HCT116 (cell line): ENCODE measurements at regions of chr1 and their contacts with region 1.

Region 1: DNA sequence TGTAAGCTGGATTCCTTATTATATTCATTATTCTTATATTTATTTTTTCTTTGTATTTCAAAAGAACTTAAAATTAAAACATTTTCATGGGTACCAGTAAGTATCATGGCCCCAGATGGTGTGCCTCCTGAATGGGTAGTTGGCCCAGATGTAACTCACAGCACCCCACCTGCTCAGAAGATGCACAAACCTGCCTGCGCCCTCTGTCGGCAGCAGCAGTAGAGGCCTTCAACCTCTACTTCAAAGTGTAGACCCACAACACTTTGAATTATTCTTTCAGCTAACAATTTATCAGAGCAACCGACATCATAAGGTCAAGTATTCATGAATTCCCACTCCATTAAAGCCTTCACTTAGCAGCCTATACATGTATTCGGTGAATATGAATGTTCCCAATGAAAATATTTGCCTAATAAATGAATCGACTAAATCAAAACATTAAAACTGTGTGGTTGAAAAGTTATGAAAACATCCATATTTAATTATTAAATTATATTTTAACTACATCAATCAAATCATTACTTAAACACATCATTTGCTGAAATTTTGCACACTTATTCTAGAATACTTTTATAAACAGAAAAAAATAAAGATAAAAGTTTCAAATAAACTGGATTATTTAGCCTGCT is 25.4 kb downstream of the PIGM start:
- DNase-seq: peak; percentile 64
- ATAC-seq: peak; percentile 94
- H3K4me3 ChIP-seq: no peak overlapping the region
- H3K27ac ChIP-seq: no peak overlapping the region
- H3K4me1 ChIP-seq: no peaks in the 10 kb centered on the region
- H3K27me3 ChIP-seq: no peaks in the 10 kb centered on the region
- CTCF ChIP-seq: peak; percentile 94 to 98 (median 95)
- POLR2A ChIP-seq: no peak
- RAD21 ChIP-seq: peak; percentile 88

Region 2: DNA sequence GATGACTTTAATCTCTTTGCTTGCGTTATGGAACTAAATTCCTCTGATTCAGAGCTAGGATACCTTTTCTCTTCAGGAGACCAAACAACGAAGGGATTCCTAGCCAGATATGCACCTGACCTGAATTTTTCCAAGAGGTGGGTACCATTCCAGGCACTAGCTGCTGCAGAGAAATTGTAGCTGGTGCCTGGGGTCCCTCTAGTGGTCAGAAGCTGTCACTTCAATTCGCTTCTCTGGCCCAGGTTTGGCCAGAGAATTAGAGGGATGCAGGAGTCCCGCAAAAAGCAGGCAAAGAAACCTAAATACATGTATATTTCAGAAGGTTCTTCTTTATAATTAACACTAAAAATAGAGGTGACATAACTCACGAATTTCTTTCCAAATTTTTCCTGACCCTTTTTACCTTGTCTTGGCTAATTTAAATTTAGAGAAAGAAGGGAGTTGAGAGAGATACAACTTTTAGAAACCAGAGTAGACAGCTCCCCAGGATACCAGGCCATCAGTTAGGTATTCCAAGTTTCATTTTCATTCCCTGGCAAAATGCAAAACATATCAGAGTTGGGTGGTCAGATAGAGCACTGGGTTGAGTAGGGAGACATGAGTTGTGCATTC is 792.2 kb before region 1 on chr1:
- CTCF ChIA-PET with region 1: interaction called, 13 read pairs
- POLR2A ChIA-PET with region 1: no interaction called
- RAD21 ChIA-PET with region 1: no interaction called
- intact Hi-C with region 1: loop called (anchors 10 kb)
- DNase-seq: peak; percentile 10
- ATAC-seq: peak; percentile 86
- H3K4me3 ChIP-seq: no peak overlapping the region
- H3K27ac ChIP-seq: no peak overlapping the region
- H3K4me1 ChIP-seq: no peaks in the 10 kb centered on the region
- H3K27me3 ChIP-seq: peaks cover 4% of the 10 kb centered on the region; the same call in 1 of the 2 replicates
- CTCF ChIP-seq: peak; percentile 65 to 89 (median 84)
- POLR2A ChIP-seq: no peak
- RAD21 ChIP-seq: peak; percentile 61

Region 3: GRCh38 chr1:159587461-159587951 is 418.9 kb before region 1 on chr1 and contains the start of gene APCS:
- CTCF ChIA-PET with region 1: no interaction called
- POLR2A ChIA-PET with region 1: no interaction called
- RAD21 ChIA-PET with region 1: no interaction called
- intact Hi-C with region 1: no loop called
- DNase-seq: no peak
- ATAC-seq: no peak
- H3K4me3 ChIP-seq: no peak within 1 kb of the TSS
- H3K27ac ChIP-seq: no peak within 1 kb of the TSS
- H3K4me1 ChIP-seq: no peaks in the 10 kb centered on the region
- H3K27me3 ChIP-seq: peaks cover 5% of the 10 kb centered on the region
- CTCF ChIP-seq: no peak
- POLR2A ChIP-seq: no peak
- RAD21 ChIP-seq: no peak
- total RNA-seq, gene APCS: 0.42 TPM

Region 4: DNA sequence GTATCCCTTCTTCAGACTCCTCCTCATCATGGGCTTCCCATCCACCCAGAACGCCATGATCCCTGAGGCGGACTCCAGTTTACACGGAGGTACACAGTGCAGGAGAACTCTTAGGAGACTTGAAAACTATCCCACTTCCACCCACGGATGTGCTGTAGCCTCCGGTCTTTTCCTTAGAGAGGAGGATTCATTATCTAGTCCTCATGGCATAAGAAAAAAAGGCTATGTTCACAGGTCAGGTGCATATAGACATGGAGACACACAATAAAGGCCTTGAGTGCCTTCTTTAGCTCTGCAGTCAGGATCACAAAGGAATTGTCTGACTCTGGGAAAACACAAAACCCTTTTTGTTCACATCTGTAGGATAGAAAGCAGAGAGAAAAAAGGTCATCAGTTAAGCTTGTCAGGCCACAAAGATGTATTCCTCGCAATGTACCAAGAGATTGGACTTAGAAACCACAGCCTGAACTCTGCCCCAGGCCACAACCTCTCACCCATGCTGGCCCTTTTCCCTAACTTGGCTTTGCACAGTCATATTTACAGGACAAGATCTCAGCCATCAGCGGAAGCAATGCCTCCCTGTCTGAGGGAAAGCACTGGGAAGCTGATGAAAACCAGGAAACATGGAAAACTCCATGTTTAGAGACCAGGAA is 301.0 kb before region 1 on chr1:
- CTCF ChIA-PET with region 1: no interaction called
- POLR2A ChIA-PET with region 1: no interaction called
- RAD21 ChIA-PET with region 1: no interaction called
- intact Hi-C with region 1: no loop called
- DNase-seq: no peak
- ATAC-seq: no peak
- H3K4me3 ChIP-seq: no peak overlapping the region
- H3K27ac ChIP-seq: no peak overlapping the region
- H3K4me1 ChIP-seq: no peaks in the 10 kb centered on the region
- H3K27me3 ChIP-seq: no peaks in the 10 kb centered on the region
- CTCF ChIP-seq: no peak
- POLR2A ChIP-seq: no peak
- RAD21 ChIP-seq: no peak

Region 5: DNA sequence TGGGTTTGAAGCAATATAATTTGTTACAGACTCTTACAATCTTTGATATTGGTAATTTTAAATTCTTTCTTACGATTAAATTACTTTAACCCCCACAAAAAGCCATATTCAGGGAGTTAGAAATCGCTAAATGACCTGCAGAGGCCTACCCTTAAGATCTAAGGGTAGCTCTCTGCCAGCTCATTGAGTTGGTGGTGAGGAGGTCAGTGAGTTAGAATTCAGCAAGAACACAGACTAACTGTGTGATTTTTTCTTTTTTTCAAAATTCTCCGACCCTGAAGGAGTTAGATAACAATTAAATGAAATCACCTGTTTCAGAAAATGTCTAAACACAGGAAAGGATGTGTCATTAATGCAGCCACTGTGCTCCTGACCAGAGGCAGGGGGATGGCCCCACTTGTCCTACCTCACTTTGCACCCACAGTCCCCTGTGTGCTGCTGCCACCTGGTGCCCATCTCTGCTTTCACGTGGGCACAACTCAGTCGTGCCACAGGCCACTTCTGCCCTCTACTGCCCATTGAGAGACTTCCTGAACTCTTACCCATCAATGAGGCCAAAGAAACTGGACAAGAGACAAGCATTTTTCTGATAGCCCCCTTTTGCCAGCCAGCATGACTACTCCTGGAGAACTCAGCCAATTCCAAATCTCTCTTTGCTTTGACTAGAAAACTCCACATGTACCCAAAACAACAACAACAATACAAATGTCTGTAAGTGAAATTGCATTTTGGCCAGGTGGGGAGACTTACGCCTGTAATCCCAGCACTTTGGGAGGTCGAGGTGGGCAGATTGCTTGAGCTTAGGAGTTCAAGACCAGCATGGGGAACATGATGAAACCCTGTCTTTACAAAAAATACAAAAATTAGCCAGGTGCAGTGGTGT is 114.9 kb before region 1 on chr1:
- CTCF ChIA-PET with region 1: interaction called, 249 read pairs
- POLR2A ChIA-PET with region 1: interaction called, 6 read pairs
- RAD21 ChIA-PET with region 1: interaction called, 9 to 32 read pairs
- intact Hi-C with region 1: loop called (anchors 1 kb)
- DNase-seq: peak; percentile 87
- ATAC-seq: peak; percentile 94
- H3K4me3 ChIP-seq: no peak overlapping the region
- H3K27ac ChIP-seq: no peak overlapping the region
- H3K4me1 ChIP-seq: peaks cover 11 to 23% of the 10 kb centered on the region in 2 experiments; a peak in 3 of 4 replicates
- H3K27me3 ChIP-seq: no peaks in the 10 kb centered on the region; the same call in 1 of the 2 replicates
- CTCF ChIP-seq: peak; percentile 99 to 100 (median 100)
- POLR2A ChIP-seq: no peak
- RAD21 ChIP-seq: peak; percentile 100

Region 6: DNA sequence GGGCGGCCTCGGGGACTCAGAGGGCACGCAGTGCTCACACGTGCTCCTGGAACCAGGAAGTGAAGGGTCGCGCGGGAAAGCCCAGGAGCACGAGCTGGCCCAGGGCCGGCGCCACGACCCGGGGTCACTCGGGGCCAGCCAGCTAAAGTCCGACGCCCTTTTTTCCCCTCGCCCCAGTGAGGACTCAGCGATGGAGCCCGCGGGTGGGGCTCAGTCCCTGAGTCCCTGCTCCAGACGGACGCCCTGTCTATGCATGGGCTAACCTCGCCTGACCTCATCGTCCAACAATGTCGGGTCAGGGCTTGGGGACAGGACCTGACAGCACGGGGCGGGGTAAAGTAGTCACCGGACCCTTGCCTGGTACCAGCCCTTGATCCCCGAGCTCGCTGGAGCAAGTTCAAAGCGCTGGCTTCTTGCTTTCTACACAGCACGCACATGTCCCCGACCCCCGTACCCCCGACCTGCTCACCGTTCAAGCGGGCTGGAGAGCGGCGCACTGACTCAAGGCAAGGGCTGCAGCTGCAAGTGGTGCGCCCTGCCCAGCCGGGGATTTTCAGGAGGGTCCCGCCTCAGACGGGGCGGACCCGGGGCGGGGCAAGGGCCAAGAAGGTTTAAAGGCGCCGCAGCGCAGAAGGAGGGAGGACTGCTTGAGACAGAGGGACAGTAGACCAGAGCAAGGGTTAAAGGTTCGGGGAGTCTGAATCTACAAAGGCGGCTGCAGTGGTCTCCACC is 81.3 kb before region 1 on chr1 and contains the start of gene TAGLN2:
- CTCF ChIA-PET with region 1: interaction called, 15 read pairs
- POLR2A ChIA-PET with region 1: interaction called, 3 read pairs
- RAD21 ChIA-PET with region 1: no interaction called
- intact Hi-C with region 1: no loop called
- DNase-seq: peak; percentile 79
- ATAC-seq: peak; percentile 87
- H3K4me3 ChIP-seq: peak within 1 kb of the TSS; percentile 57 to 62
- H3K27ac ChIP-seq: peak within 1 kb of the TSS; percentile 73
- H3K4me1 ChIP-seq: peaks cover 21 to 42% of the 10 kb centered on the region in 2 experiments
- H3K27me3 ChIP-seq: no peaks in the 10 kb centered on the region
- CTCF ChIP-seq: no peak
- POLR2A ChIP-seq: peak; percentile 76
- RAD21 ChIP-seq: no peak
- total RNA-seq, gene TAGLN2: 127 TPM

Region 7: GRCh38 chr1:159953536-159954515 is 52.6 kb before region 1 on chr1 and contains the start of gene SLAMF9:
- CTCF ChIA-PET with region 1: interaction called, 11 read pairs
- POLR2A ChIA-PET with region 1: no interaction called
- RAD21 ChIA-PET with region 1: interaction called in 1 of 2 experiments, 4 read pairs
- intact Hi-C with region 1: no loop called
- DNase-seq: no peak
- ATAC-seq: no peak
- H3K4me3 ChIP-seq: no peak within 1 kb of the TSS
- H3K27ac ChIP-seq: no peak within 1 kb of the TSS
- H3K4me1 ChIP-seq: peaks cover 0 to under 1% of the 10 kb centered on the region in 2 experiments; a peak in 1 of 4 replicates
- H3K27me3 ChIP-seq: peaks cover 10% of the 10 kb centered on the region
- CTCF ChIP-seq: no peak
- POLR2A ChIP-seq: no peak
- RAD21 ChIP-seq: no peak
- total RNA-seq, gene SLAMF9: not detected

Region 8: GRCh38 chr1:160046494-160047110 is 40.2 kb after region 1 on chr1:
- CTCF ChIA-PET with region 1: interaction called, 16 read pairs
- POLR2A ChIA-PET with region 1: no interaction called
- RAD21 ChIA-PET with region 1: no interaction called
- intact Hi-C with region 1: no loop called
- DNase-seq: no peak
- ATAC-seq: peak; percentile 90
- H3K4me3 ChIP-seq: no peak overlapping the region
- H3K27ac ChIP-seq: no peak overlapping the region
- H3K4me1 ChIP-seq: peaks cover 4 to 6% of the 10 kb centered on the region in 2 experiments; a peak in 3 of 4 replicates
- H3K27me3 ChIP-seq: peaks cover 13% of the 10 kb centered on the region
- CTCF ChIP-seq: peak; percentile 66 to 88 (median 81)
- POLR2A ChIP-seq: no peak
- RAD21 ChIP-seq: peak; percentile 76

Region 9: DNA sequence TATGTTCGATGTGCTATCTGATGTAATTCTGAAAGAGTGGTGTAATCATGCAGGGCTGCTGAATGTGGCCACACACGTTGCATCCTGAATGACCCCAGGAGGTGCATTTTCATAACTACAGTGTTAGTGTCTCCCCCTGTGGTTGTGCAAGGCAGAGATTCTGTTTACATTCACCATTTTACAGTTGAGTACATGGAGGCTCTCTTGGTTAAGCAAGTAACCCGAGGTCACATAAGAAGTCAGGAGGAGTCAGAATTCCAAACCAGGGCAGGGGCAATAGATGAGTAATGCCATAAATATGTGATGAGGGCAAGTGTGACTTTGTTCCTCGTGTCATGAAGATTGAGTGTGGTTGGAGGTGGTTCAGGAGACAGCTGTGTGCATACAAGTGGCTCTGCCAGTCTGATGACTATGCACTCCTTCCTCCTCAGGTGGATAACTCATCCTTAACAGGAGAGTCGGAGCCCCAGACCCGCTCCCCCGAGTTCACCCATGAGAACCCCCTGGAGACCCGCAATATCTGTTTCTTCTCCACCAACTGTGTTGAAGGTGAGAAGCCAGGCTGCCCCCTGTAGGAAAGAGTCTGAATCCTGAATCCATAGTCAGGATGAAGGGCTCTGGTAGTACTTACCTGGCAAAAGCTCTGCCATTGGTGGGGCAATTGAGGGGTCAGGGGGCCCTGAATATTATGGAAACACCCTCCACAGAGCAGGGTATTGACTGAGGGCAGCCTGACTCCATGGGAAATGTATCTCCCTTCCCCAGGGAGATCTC is 118.5 kb after region 1 on chr1:
- CTCF ChIA-PET with region 1: no interaction called
- POLR2A ChIA-PET with region 1: no interaction called
- RAD21 ChIA-PET with region 1: no interaction called
- intact Hi-C with region 1: no loop called
- DNase-seq: peak; percentile 52
- ATAC-seq: peak; percentile 78
- H3K4me3 ChIP-seq: peak overlapping the region in 1 of 2 experiments; percentile 39; a peak in 2 of 4 replicates
- H3K27ac ChIP-seq: no peak overlapping the region
- H3K4me1 ChIP-seq: peaks cover 15 to 31% of the 10 kb centered on the region in 2 experiments
- H3K27me3 ChIP-seq: no peaks in the 10 kb centered on the region
- CTCF ChIP-seq: peak in 1 of 3 experiments; percentile 27; a peak in 1 of 6 replicates
- POLR2A ChIP-seq: no peak
- RAD21 ChIP-seq: peak; percentile 10; the same call in 1 of the 2 replicates

Region 10: GRCh38 chr1:160342953-160343869 is 336.8 kb after region 1 on chr1 and contains the starts of genes COPA and NCSTN:
- CTCF ChIA-PET with region 1: no interaction called
- POLR2A ChIA-PET with region 1: no interaction called
- RAD21 ChIA-PET with region 1: no interaction called
- intact Hi-C with region 1: no loop called
- DNase-seq: peak; percentile 92
- ATAC-seq: peak; percentile 98
- H3K4me3 ChIP-seq: peak within 1 kb of the TSS; percentile 89 to 97
- H3K27ac ChIP-seq: peak within 1 kb of the TSS; percentile 59
- H3K4me1 ChIP-seq: peaks cover 4 to 12% of the 10 kb centered on the region in 2 experiments; a peak in 3 of 4 replicates
- H3K27me3 ChIP-seq: no peaks in the 10 kb centered on the region
- CTCF ChIP-seq: no peak
- POLR2A ChIP-seq: peak; percentile 80
- RAD21 ChIP-seq: no peak
- total RNA-seq, gene COPA: 132 TPM
- total RNA-seq, gene NCSTN: 68.4 TPM